CD4-positive, alpha-beta memory T cell (primary cell): ENCODE measurements at regions of chr19 and their contacts with region 1.

Region 1: GRCh38 chr19:48480558-48481500 is 11.7 kb downstream of the CYTH2 start:
- DNase-seq: peak; percentile 60 to 74 (median 65)
- H3K4me3 ChIP-seq: peak overlapping the region; percentile 51 to 52
- H3K4me3 Mint-ChIP-seq: peak overlapping the region; percentile 81 to 89 (median 84)
- H3K27ac ChIP-seq: peak overlapping the region; percentile 58
- H3K27ac Mint-ChIP-seq: peak overlapping the region; percentile 78 to 93 (median 85)
- H3K4me1 ChIP-seq: peaks cover 12% of the 10 kb centered on the region
- H3K4me1 Mint-ChIP-seq: peaks cover 4 to 28% (median 17%) of the 10 kb centered on the region in 4 donors
- H3K27me3 ChIP-seq: no peaks in the 10 kb centered on the region
- H3K27me3 Mint-ChIP-seq: no peaks in the 10 kb centered on the region

Region 2: GRCh38 chr19:48398375-48399235 is 82.2 kb before region 1 on chr19:
- CTCF ChIA-PET with region 1: no interaction called
- POLR2A ChIA-PET with region 1: no interaction called
- intact Hi-C with region 1: no loop called
- DNase-seq: peak; percentile 84 to 87 (median 87)
- H3K4me3 ChIP-seq: peak overlapping the region; percentile 55 to 79
- H3K4me3 Mint-ChIP-seq: peak overlapping the region; percentile 58 to 89 (median 65)
- H3K27ac ChIP-seq: peak overlapping the region; percentile 39
- H3K27ac Mint-ChIP-seq: peak overlapping the region; percentile 62 to 92 (median 74)
- H3K4me1 ChIP-seq: peaks cover 41% of the 10 kb centered on the region
- H3K4me1 Mint-ChIP-seq: peaks cover 23 to 58% (median 44%) of the 10 kb centered on the region in 4 donors
- H3K27me3 ChIP-seq: peaks cover 23% of the 10 kb centered on the region
- H3K27me3 Mint-ChIP-seq: peaks cover 9 to 18% of the 10 kb centered on the region in 2 donors

Region 3: DNA sequence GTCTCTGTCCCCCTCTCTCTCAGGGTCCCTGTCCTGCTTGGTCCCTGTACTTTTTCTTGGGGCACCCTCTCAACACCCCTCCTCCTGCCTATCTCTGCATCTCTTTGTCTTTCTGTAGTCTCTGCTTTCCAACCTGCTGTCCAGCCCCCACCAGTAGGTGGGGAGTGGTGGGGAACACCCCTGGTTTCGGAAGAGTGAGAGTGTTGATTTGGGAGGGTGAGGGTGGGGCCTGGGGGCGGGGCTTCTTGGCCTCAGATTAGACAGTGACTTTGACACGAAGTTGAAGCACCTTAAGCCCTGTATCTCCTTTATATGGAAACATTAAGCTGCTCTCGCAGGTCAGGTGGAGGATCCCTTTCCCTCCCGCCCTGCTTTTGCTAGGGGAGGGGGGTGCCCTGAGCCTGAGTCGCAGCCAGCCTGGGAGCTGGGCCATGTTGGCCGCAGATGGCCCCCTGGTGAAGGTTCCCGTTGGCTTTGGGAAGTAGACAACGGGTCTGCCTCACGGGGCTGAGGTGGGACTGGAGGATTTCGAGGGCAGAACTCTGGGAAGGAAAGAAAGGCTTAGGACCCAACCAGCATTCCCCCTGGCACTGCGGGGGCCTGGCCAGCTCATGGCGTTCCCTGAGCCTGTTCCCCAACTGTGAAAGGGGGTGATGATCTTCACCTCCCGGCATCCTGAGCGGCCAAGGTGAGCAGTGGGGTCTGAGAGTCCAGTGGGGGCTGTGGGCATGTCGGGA is 25.5 kb before region 1 on chr19 and contains the start of gene KCNJ14:
- CTCF ChIA-PET with region 1: no interaction called
- POLR2A ChIA-PET with region 1: no interaction called
- intact Hi-C with region 1: no loop called
- DNase-seq: no peak
- H3K4me3 ChIP-seq: no peak within 1 kb of the TSS
- H3K4me3 Mint-ChIP-seq: no peak within 1 kb of the TSS
- H3K27ac ChIP-seq: no peak within 1 kb of the TSS
- H3K27ac Mint-ChIP-seq: peak within 1 kb of the TSS in 1 of 7 donors; percentile 55
- H3K4me1 ChIP-seq: no peaks in the 10 kb centered on the region
- H3K4me1 Mint-ChIP-seq: peaks cover 0 to 5% (median 5%) of the 10 kb centered on the region in 4 donors
- H3K27me3 ChIP-seq: no peaks in the 10 kb centered on the region
- H3K27me3 Mint-ChIP-seq: no peaks in the 10 kb centered on the region
- total RNA-seq, gene KCNJ14: 2.5 to 3.6 TPM

Region 4: GRCh38 chr19:48492925-48493717 is 12.3 kb after region 1 on chr19:
- CTCF ChIA-PET with region 1: interaction called, 26 read pairs
- POLR2A ChIA-PET with region 1: interaction called, 12 read pairs
- intact Hi-C with region 1: loop called (anchors 1 kb)
- DNase-seq: peak; percentile 75 to 87 (median 77)
- H3K4me3 ChIP-seq: peak overlapping the region in 1 of 2 donors; percentile 47
- H3K4me3 Mint-ChIP-seq: peak overlapping the region; percentile 52 to 79 (median 70)
- H3K27ac ChIP-seq: no peak overlapping the region
- H3K27ac Mint-ChIP-seq: peak overlapping the region in 5 of 7 donors; percentile 51 to 84 (median 60)
- H3K4me1 ChIP-seq: peaks cover 40% of the 10 kb centered on the region
- H3K4me1 Mint-ChIP-seq: peaks cover 15 to 53% (median 28%) of the 10 kb centered on the region in 4 donors
- H3K27me3 ChIP-seq: peaks cover 15% of the 10 kb centered on the region
- H3K27me3 Mint-ChIP-seq: peaks cover 22 to 28% of the 10 kb centered on the region in 2 donors